Activated CD4-positive, alpha-beta T cell treated with anti-CD3 and anti-CD28 coated beads for 36 hours (primary cell): ENCODE measurements at regions of chr11 and their contacts with region 1.

Region 1: DNA sequence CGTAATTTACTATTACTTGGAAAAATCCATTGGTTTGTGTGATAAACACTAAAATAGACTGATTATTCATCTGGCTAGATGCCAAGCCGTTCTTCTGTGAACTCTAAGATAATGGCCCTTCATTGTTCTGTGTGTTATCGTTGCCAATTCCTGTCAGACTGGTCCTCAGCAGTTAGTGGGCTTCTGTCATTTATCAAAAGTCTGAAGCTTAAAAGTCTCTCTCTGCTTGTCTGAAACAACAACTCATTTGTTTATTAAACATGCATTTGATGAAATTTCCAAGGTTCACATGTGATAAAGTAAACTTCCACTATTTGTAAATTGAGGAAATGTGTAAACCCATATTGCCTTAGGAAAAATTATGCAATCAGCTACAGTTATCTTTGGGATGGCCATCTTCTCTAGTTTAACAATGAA is 21.1 kb upstream of the RDX start:
- DNase-seq: no peak
- ATAC-seq: no peak
- H3K4me3 Mint-ChIP-seq: no peak overlapping the region
- H3K27ac Mint-ChIP-seq: no peak overlapping the region
- H3K4me1 Mint-ChIP-seq: peaks cover under 1% of the 10 kb centered on the region
- H3K27me3 Mint-ChIP-seq: peaks cover 7% of the 10 kb centered on the region

Region 2: DNA sequence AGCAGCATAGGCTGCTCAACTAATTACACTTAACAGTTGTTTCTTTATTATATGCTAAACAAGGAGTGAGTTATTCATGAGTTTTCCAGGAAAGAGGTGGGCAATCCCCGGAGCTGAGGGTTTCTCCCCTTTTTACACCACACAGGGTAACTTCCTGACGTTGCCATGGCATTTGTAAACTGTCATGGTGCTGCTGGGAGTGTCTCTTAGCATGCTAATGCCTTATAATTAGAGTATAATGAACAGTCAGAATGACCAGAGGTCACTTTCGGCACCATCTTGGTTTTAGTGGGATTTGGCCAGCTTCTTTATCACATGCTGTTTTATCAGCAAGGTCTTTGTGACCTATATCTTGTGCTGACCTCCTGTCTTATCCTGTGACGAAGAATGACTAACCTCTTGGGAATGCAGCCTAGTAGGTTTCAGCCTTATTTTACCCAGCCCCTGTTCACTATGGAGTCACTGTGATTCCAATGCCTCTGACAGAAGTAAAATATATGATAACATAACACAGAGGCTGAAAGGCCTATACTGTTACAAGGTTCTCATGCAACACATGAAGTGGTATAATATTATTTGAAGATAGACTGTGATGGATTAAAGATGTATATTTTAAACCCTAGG is 20.2 kb after region 1 on chr11:
- CTCF ChIA-PET with region 1: interaction called, 4 read pairs
- POLR2A ChIA-PET with region 1: interaction called, 15 read pairs
- intact Hi-C with region 1: no loop called
- DNase-seq: peak; percentile 73
- ATAC-seq: peak; percentile 92
- H3K4me3 Mint-ChIP-seq: no peak overlapping the region
- H3K27ac Mint-ChIP-seq: peak overlapping the region; percentile 51
- H3K4me1 Mint-ChIP-seq: peaks cover 21% of the 10 kb centered on the region
- H3K27me3 Mint-ChIP-seq: no peaks in the 10 kb centered on the region

Region 3: DNA sequence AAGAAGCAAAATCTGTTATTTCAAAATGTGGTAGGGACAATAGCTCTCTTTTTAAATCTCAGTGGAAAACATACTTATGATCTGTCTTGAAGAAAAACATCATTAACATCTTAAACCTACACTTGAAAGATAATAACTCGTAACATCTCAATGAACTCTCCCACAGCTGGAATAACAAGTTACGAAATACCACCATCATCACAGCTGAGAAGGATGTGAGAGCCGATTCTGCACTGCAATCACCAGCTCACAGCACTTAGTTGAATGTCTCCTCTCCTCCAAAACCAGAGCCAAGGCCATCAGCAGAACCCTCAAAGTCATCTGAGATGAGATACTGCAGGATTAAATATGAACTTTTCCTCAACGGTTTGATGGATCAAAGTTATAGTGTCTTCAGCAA is 270.4 kb after region 1 on chr11:
- CTCF ChIA-PET with region 1: no interaction called
- POLR2A ChIA-PET with region 1: no interaction called
- intact Hi-C with region 1: no loop called
- DNase-seq: no peak
- ATAC-seq: no peak
- H3K4me3 Mint-ChIP-seq: no peak overlapping the region
- H3K27ac Mint-ChIP-seq: no peak overlapping the region
- H3K4me1 Mint-ChIP-seq: no peaks in the 10 kb centered on the region
- H3K27me3 Mint-ChIP-seq: no peaks in the 10 kb centered on the region